K562 (cell line): ENCODE measurements at regions of chr12 and their contacts with region 1.

Region 1: GRCh38 chr12:120292661-120293531 is at the start of gene RNU4-1:
- DNase-seq: peak; percentile 54 to 94 (median 61)
- ATAC-seq: peak; percentile 76
- H3K4me3 ChIP-seq: peak within 1 kb of the TSS; percentile 44
- H3K27ac ChIP-seq: peak within 1 kb of the TSS; percentile 100
- H3K4me1 ChIP-seq: peaks cover 8 to 18% of the 10 kb centered on the region in 2 experiments; a peak in 4 of 5 replicates
- H3K27me3 ChIP-seq: no peaks in the 10 kb centered on the region
- CTCF ChIP-seq: no peak
- EP300 ChIP-seq: peak; percentile 62
- POLR2A ChIP-seq: peak; percentile 100
- RAD21 ChIP-seq: no peak
- polyA plus RNA-seq, gene RNU4-1: not detected

Region 2: DNA sequence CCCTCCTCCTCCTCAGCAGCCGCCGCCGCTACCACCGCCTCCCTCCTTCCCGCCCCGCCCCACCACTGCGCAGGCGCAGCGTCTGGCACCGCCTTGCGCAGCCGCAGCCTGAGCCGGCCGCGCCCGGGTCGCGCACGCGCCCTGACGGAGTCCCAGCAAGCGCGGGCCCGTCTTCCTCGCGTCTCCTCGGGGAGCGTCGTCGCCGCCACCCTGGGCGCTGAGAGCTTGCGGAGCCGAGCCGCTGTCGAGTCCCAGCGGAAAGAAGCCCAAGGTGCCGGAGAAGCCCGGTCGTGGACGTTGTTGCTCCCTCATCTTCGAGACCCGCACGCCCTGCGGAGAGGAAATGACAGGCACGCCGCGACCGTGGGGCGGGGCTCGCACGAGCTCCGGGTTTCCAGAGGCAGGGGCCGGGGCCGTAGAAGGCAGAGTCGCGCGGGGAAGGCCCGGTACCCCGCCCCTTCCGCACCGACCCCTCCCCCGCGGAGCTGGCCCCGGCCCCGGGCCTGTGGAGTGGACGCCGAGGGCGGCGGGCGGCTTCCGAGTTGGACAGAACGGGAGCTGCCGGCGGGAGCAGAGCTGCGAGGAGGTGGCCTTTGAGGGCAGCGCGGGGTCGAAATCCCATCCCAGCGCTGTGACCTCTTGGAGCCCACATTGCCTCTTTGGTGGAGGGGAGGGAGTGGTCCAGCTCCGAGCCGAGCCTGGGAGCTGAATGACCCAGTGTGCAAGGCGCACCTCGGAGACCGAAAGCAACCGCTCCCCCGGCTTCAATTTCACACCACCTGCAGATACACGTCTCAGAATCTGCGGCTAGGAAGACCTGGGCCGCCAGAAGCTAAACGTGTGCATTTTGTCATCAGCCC is 175.9 kb before region 1 on chr12:
- CTCF ChIA-PET with region 1: no interaction called
- POLR2A ChIA-PET with region 1: interaction called, 22 read pairs
- in situ Hi-C with region 1: no loop called
- intact Hi-C with region 1: loop called (anchors 10 kb)
- DNase-seq: peak; percentile 96 to 100 (median 99)
- ATAC-seq: peak; percentile 88
- H3K4me3 ChIP-seq: peak overlapping the region; percentile 75
- H3K27ac ChIP-seq: peak overlapping the region; percentile 71
- H3K4me1 ChIP-seq: peaks cover 15 to 26% of the 10 kb centered on the region in 2 experiments; a peak in 4 of 5 replicates
- H3K27me3 ChIP-seq: no peaks in the 10 kb centered on the region
- CTCF ChIP-seq: no peak
- EP300 ChIP-seq: no peak
- POLR2A ChIP-seq: peak; percentile 90
- RAD21 ChIP-seq: no peak

Region 3: GRCh38 chr12:120234643-120235368 is 58.1 kb before region 1 on chr12:
- CTCF ChIA-PET with region 1: no interaction called
- POLR2A ChIA-PET with region 1: interaction called, 420 read pairs
- in situ Hi-C with region 1: no loop called
- intact Hi-C with region 1: no loop called
- DNase-seq: peak; percentile 72 to 88 (median 76)
- ATAC-seq: peak; percentile 61
- H3K4me3 ChIP-seq: no peak overlapping the region
- H3K27ac ChIP-seq: peak overlapping the region; percentile 51; the same call in 2 of the 3 replicates
- H3K4me1 ChIP-seq: peaks cover 63 to 72% of the 10 kb centered on the region in 2 experiments
- H3K27me3 ChIP-seq: no peaks in the 10 kb centered on the region
- CTCF ChIP-seq: peak; percentile 28 to 51 (median 49); a peak in 4 of 6 replicates
- EP300 ChIP-seq: peak; percentile 50; the same call in 1 of the 2 replicates
- POLR2A ChIP-seq: no peak
- RAD21 ChIP-seq: peak in 1 of 2 experiments; percentile 61; a peak in 3 of 4 replicates

Region 4: DNA sequence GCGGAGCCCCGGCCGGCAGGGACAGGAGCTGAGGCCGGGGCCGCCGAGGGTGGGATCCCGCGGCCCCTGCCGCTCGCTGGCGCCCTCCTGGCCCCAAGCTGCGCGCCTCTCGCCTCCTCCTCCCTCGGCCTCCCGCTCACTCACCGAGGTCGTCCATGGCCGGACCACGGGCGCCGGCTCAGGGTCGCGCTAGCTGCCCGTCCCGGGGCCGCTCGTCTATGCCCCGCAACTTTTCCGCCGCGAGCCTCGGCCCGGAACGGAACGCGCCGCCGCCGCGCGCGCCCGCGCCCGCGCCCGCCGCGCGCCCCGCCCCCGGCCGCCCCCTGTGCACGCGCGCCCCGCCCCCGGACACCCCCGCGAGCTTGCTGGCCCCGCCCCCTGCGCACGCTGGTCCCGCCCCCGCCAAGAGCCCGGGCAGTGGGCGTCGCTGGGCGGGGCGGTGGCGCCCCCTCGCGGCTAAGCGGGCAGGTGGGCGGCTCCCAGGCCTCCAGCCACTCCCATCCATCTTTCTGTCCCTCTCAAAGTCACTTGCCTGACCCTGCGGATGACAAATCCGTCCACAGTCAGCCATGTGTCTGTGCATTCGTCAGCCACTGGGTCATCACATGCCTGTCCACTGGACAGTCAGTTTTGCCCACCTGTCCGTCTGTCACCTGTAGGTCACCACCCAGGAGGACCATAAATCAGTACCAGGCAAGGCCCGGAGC is 27.3 kb before region 1 on chr12 and contains the start of gene PXN:
- CTCF ChIA-PET with region 1: no interaction called
- POLR2A ChIA-PET with region 1: interaction called, 110 read pairs
- in situ Hi-C with region 1: no loop called
- intact Hi-C with region 1: no loop called
- DNase-seq: peak; percentile 88 to 99 (median 98)
- ATAC-seq: peak; percentile 95
- H3K4me3 ChIP-seq: peak within 1 kb of the TSS; percentile 70
- H3K27ac ChIP-seq: peak within 1 kb of the TSS; percentile 76
- H3K4me1 ChIP-seq: peaks cover 37% of the 10 kb centered on the region in 2 experiments; a peak in 4 of 5 replicates
- H3K27me3 ChIP-seq: no peaks in the 10 kb centered on the region
- CTCF ChIP-seq: peak; percentile 68 to 92 (median 86)
- EP300 ChIP-seq: no peak
- POLR2A ChIP-seq: peak; percentile 60
- RAD21 ChIP-seq: peak; percentile 91 to 94
- polyA plus RNA-seq, gene PXN: 4.0 to 4.8 TPM

Region 5: GRCh38 chr12:120350576-120351350 is 57.9 kb after region 1 on chr12:
- CTCF ChIA-PET with region 1: no interaction called
- POLR2A ChIA-PET with region 1: interaction called, 10 read pairs
- in situ Hi-C with region 1: no loop called
- intact Hi-C with region 1: no loop called
- DNase-seq: no peak
- ATAC-seq: no peak
- H3K4me3 ChIP-seq: no peak overlapping the region
- H3K27ac ChIP-seq: no peak overlapping the region
- H3K4me1 ChIP-seq: peaks cover 0 to 8% of the 10 kb centered on the region in 2 experiments; a peak in 1 of 5 replicates
- H3K27me3 ChIP-seq: peaks cover 25 to 47% of the 10 kb centered on the region in 2 experiments; a peak in 4 of 5 replicates
- CTCF ChIP-seq: no peak
- EP300 ChIP-seq: no peak
- POLR2A ChIP-seq: no peak
- RAD21 ChIP-seq: no peak

Region 6: GRCh38 chr12:120469450-120470149 is 176.7 kb after region 1 on chr12 and contains the start of gene SRSF9:
- CTCF ChIA-PET with region 1: no interaction called
- POLR2A ChIA-PET with region 1: interaction called, 16 read pairs
- in situ Hi-C with region 1: no loop called
- intact Hi-C with region 1: no loop called
- DNase-seq: peak; percentile 94 to 99 (median 96)
- ATAC-seq: peak; percentile 87
- H3K4me3 ChIP-seq: peak within 1 kb of the TSS; percentile 90
- H3K27ac ChIP-seq: peak within 1 kb of the TSS; percentile 96
- H3K4me1 ChIP-seq: peaks cover 27 to 35% of the 10 kb centered on the region in 2 experiments
- H3K27me3 ChIP-seq: no peaks in the 10 kb centered on the region
- CTCF ChIP-seq: peak; percentile 88 to 94 (median 93)
- EP300 ChIP-seq: no peak
- POLR2A ChIP-seq: peak; percentile 87
- RAD21 ChIP-seq: peak in 1 of 2 experiments; percentile 36; a peak in 3 of 4 replicates
- polyA plus RNA-seq, gene SRSF9: 40.3 to 50.5 TPM

Region 7: DNA sequence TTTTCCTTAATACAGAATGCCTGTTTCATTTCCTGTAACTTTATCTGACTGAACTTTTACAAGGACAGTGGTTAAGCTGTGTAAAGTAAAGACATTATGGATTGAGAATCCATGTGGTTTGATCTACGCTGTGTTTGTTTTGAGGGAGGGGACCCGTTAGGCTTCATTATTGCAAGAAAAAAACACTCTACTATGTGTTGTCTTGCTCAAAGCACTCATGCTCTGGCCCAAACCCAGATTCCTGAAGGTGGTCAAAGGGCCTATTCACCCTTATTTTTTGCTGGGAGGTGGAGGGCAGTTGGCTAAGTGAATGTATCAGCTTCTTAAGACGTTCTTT is 253.1 kb after region 1 on chr12:
- CTCF ChIA-PET with region 1: no interaction called
- POLR2A ChIA-PET with region 1: no interaction called
- in situ Hi-C with region 1: no loop called
- intact Hi-C with region 1: no loop called
- DNase-seq: no peak
- ATAC-seq: no peak
- H3K4me3 ChIP-seq: no peak overlapping the region
- H3K27ac ChIP-seq: no peak overlapping the region
- H3K4me1 ChIP-seq: peaks cover 5 to 8% of the 10 kb centered on the region in 2 experiments; a peak in 4 of 5 replicates
- H3K27me3 ChIP-seq: no peaks in the 10 kb centered on the region
- CTCF ChIP-seq: no peak
- EP300 ChIP-seq: no peak
- POLR2A ChIP-seq: no peak
- RAD21 ChIP-seq: no peak

Region 8: DNA sequence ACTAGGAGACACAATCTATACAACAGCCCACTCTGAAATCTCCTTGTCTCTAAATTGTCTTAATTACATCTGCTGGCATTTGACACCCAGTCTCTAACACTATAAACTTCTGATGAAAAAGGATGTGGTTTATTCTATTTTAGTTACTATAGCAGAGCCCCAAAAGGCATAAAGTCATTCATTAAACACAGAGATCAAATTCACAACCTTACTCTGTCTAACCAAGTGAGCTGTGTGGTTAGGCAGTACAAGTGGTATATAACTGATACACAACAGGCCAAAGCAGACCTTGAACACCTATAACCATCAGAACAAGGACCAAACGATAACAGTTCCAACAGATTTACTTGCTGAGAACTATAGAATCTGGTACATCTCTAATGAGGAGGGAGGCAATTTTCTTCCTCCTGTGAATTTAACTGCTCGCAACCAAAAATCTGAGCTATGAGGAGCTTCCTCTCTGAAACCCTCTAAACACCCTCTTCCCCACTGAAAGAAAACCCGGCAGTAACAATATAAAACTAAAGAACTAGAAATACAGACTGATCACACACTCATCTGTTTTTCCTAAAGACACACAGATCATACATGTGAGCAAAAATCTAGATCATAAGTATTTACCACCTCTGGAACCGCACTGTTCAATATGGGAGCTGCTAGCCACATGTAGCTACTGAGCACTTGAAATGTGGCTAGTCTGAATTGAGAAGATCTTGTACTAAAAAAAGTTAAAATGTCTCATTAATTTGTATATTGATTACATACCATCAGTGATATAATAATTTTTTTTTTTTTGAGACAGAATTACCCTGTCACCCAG is 593.5 kb after region 1 on chr12:
- CTCF ChIA-PET with region 1: no interaction called
- POLR2A ChIA-PET with region 1: no interaction called
- in situ Hi-C with region 1: no loop called
- intact Hi-C with region 1: no loop called
- DNase-seq: no peak
- ATAC-seq: no peak
- H3K4me3 ChIP-seq: no peak overlapping the region
- H3K27ac ChIP-seq: no peak overlapping the region
- H3K4me1 ChIP-seq: 0 out of 5 replicates have a peak, but pooled peaks cover 0 to 2% of the 10 kb centered on the region in 2 experiments
- H3K27me3 ChIP-seq: no peaks in the 10 kb centered on the region
- CTCF ChIP-seq: no peak
- EP300 ChIP-seq: no peak
- POLR2A ChIP-seq: no peak
- RAD21 ChIP-seq: no peak